ENCODE measurements at regions of chr12 and their contacts with region 1.

Region 1: DNA sequence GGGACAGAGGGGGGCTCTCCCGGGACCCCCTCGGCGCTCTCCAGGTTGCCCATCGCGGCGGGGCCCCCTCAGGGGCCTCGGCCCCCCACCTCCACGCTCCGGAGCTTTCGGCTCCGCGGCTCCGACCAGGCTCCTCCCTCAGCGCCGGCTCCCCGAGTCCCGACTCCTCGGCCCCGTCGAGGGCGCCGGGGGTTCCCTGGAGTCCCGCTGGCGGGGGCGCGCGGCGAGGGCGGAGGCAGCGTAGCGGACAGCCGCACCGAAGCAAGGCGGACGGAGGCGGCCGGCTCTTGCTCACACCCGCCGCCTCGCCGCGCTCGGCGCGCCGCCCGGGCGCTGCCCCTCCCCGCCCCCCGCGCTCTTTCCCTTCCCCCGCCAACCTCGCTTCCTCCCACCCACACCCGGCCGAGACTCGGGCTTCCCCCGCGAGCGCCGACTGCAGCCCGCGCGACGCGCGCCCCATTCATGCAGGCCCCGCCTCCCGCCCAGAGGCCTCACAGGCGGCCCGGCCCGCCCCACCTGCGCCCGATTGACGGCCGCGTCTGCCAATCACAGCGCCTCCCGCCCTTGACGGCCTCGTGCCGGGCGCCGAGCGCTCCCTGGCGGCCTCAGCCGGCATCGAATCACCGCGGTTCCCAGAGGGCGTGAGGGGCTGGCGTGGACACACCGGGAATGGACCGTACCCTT is at the start of gene FMNL3:
- DNase-seq: peak; percentile 99 to 100 (median 100)
- ATAC-seq: peak; percentile 97 to 99
- H3K4me3 ChIP-seq: peak within 1 kb of the TSS; percentile 74
- H3K27ac ChIP-seq: peak within 1 kb of the TSS; percentile 81
- H3K4me1 ChIP-seq: peaks cover 4% of the 10 kb centered on the region
- H3K27me3 ChIP-seq: no peaks in the 10 kb centered on the region
- total RNA-seq, gene FMNL3: 11.7 to 19.0 (median 11.9) TPM

Region 2: GRCh38 chr12:49121047-49121696 is 586.1 kb before region 1 on chr12:
- intact Hi-C with region 1: no loop called
- DNase-seq: peak in 1 of 3 donors; percentile 33
- ATAC-seq: peak; percentile 81 to 83
- H3K4me3 ChIP-seq: no peak overlapping the region
- H3K27ac ChIP-seq: no peak overlapping the region
- H3K4me1 ChIP-seq: no peaks in the 10 kb centered on the region
- H3K27me3 ChIP-seq: no peaks in the 10 kb centered on the region

Region 3: DNA sequence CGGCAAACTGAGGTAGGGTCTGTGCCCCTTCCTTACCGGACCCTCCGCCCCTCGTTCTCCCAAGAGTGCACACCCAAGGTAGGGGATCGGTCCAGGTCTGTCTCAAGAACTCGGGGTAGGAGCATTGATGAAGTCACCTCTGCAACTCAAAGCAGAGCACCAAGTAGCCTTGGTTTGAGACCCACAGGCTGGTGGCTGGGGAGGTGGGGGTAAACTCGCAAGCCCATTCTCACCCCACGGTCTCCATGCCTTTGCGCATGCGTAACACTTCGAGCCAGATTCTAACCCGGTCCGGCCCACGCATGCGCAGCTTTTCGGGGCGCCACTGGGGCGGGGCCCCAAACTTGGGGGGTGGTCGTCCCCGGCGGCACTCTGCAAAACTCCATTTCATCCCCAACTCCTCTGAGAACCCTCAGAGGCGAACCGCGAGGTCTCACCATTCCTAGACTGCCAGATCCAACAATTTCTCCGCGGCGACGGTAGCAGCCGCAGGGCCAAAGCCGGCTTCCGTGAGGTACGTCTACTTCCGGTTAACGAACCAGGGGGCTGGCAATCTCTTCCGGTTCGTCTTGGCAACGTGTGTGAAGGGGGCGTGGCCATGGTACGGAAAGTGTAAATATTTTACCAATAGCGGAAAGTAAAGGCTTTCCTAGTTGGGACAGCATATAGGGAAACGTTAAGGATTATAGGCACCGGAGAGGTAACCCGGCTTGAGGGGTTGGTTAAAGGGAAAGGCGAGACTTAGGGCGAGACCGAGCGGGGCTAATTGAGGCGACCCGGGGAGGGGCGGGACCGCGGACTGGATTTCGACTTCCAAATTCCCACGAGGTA is 139.4 kb before region 1 on chr12 and contains the start of gene MCRS1:
- intact Hi-C with region 1: no loop called
- DNase-seq: peak; percentile 88 to 94 (median 93)
- ATAC-seq: peak; percentile 87 to 89
- H3K4me3 ChIP-seq: peak within 1 kb of the TSS; percentile 95
- H3K27ac ChIP-seq: peak within 1 kb of the TSS; percentile 68
- H3K4me1 ChIP-seq: peaks cover 10% of the 10 kb centered on the region
- H3K27me3 ChIP-seq: no peaks in the 10 kb centered on the region
- total RNA-seq, gene MCRS1: 81.7 to 115 (median 87.0) TPM

Region 4: DNA sequence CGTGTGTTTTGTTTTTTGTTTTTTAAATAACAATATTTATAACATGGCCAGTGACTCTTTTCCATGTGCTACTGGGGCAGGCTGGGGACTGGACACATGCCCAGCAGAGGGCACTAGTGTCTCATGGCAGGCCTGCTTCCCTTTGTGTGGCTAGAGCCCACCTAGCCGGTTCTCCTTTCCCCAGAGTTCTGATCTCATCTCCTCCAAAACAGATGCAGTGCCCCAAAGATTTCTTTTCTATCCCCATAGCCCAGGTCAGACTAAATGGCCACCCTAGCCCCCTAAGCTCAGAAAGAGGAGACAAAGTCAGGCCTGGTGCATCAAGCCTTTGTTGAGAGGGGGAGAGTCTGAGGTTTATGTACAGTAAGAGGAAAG is 62.7 kb before region 1 on chr12:
- intact Hi-C with region 1: loop called (anchors 1 to 2 kb)
- DNase-seq: peak; percentile 85 to 91 (median 91)
- ATAC-seq: peak; percentile 67 to 73
- H3K4me3 ChIP-seq: no peak overlapping the region
- H3K27ac ChIP-seq: no peak overlapping the region
- H3K4me1 ChIP-seq: peaks cover 5% of the 10 kb centered on the region
- H3K27me3 ChIP-seq: no peaks in the 10 kb centered on the region

Region 5: DNA sequence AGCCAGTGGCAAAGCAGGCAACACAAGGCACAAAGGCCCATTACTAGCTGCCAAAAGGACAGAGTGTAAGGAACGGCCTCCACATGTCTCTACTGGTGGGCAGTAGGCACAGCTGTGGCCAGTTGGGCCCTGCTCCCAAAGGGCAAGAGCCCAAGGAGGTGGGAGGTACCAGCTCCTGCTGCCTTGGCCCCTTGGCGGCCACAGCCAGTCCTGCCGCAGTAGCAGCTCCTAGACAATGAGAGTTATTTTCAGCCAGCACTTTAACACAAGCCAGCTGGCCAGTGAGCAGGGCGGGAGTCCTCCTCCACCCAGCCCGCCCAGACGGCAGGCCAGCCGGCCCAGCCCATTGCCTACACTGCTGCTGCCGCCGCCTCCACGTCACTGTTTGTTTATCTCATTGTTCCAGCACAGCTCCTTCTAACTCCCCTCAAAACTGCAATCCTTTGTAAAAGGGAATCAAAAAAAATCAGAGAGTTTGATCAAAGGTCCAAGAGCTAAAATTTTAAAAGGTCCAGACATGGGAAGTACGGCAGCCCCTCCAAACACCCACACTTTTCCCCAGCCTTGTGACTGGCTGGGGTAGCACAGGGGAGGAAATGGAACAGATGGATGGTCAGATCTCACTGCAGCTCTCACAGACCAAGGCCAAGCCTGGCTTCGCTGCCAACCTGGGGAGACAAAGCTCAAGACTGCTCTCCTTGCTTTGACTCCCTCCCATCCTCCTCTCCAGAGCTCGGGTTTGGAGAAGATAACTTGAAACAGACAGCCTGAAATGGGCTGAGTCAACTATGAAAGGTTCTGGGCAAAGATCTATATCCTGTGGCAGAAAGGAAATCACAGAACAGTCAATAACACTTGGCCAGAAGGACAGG is 33.6 kb before region 1 on chr12:
- intact Hi-C with region 1: loop called in 1 of 4 experiments (anchors 5 kb)
- DNase-seq: peak; percentile 95 to 97 (median 97)
- ATAC-seq: peak; percentile 98
- H3K4me3 ChIP-seq: no peak overlapping the region
- H3K27ac ChIP-seq: peak overlapping the region; percentile 100
- H3K4me1 ChIP-seq: peaks cover 42% of the 10 kb centered on the region
- H3K27me3 ChIP-seq: no peaks in the 10 kb centered on the region

Measured in right cardiac atrium (tissue), 5 donors.